Activated CD8-positive, alpha-beta memory T cell treated with anti-CD3 and anti-CD28 coated beads, Interleukin-2, amount 10 ng/mL, durations not matched to agents 7 days and 5 days (primary cell): ENCODE measurements at regions of chr10 and their contacts with region 1.

Region 1: GRCh38 chr10:17375936-17376584 is 78.3 kb downstream of the ST8SIA6 start:
- DNase-seq: no peak
- ATAC-seq: no peak
- H3K4me3 Mint-ChIP-seq: no peak overlapping the region
- H3K27ac Mint-ChIP-seq: no peak overlapping the region
- H3K4me1 Mint-ChIP-seq: no peaks in the 10 kb centered on the region
- H3K27me3 Mint-ChIP-seq: peaks cover 5% of the 10 kb centered on the region

Region 2: GRCh38 chr10:17365402-17365801 is 10.7 kb before region 1 on chr10:
- CTCF ChIA-PET with region 1: interaction called, 14 read pairs
- DNase-seq: no peak
- ATAC-seq: no peak
- H3K4me3 Mint-ChIP-seq: no peak overlapping the region
- H3K27ac Mint-ChIP-seq: no peak overlapping the region
- H3K4me1 Mint-ChIP-seq: no peaks in the 10 kb centered on the region
- H3K27me3 Mint-ChIP-seq: peaks cover 10% of the 10 kb centered on the region